ENCODE measurements at regions of chr12 and their contacts with region 1.

Region 1: GRCh38 chr12:16939871-16940306 is 333.9 kb upstream of the LMO3 start:
- DNase-seq: peak; percentile 82 to 86
- H3K4me3 ChIP-seq: no peak overlapping the region
- H3K4me3 Mint-ChIP-seq: no peak overlapping the region
- H3K27ac Mint-ChIP-seq: no peak overlapping the region
- H3K4me1 ChIP-seq: no peaks in the 10 kb centered on the region
- H3K4me1 Mint-ChIP-seq: no peaks in the 10 kb centered on the region
- H3K27me3 ChIP-seq: no peaks in the 10 kb centered on the region
- H3K27me3 Mint-ChIP-seq: peaks cover 2% of the 10 kb centered on the region
- CTCF ChIP-seq: peak; percentile 85 to 99

Region 2: GRCh38 chr12:17159506-17160300 is 219.8 kb after region 1 on chr12:
- CTCF ChIA-PET with region 1: no interaction called
- POLR2A ChIA-PET with region 1: no interaction called
- intact Hi-C with region 1: loop called (anchors 10 kb)
- DNase-seq: no peak
- H3K4me3 ChIP-seq: no peak overlapping the region
- H3K4me3 Mint-ChIP-seq: no peak overlapping the region
- H3K27ac Mint-ChIP-seq: no peak overlapping the region
- H3K4me1 ChIP-seq: no peaks in the 10 kb centered on the region
- H3K4me1 Mint-ChIP-seq: no peaks in the 10 kb centered on the region
- H3K27me3 ChIP-seq: no peaks in the 10 kb centered on the region
- H3K27me3 Mint-ChIP-seq: no peaks in the 10 kb centered on the region
- CTCF ChIP-seq: no peak

Region 3: GRCh38 chr12:17511369-17511768 is 571.5 kb after region 1 on chr12:
- CTCF ChIA-PET with region 1: no interaction called
- POLR2A ChIA-PET with region 1: no interaction called
- intact Hi-C with region 1: loop called (anchors 5 kb)
- DNase-seq: no peak
- H3K4me3 ChIP-seq: no peak overlapping the region
- H3K4me3 Mint-ChIP-seq: no peak overlapping the region
- H3K27ac Mint-ChIP-seq: no peak overlapping the region
- H3K4me1 ChIP-seq: no peaks in the 10 kb centered on the region
- H3K4me1 Mint-ChIP-seq: no peaks in the 10 kb centered on the region
- H3K27me3 ChIP-seq: no peaks in the 10 kb centered on the region
- H3K27me3 Mint-ChIP-seq: peaks cover 13% of the 10 kb centered on the region
- CTCF ChIP-seq: peak; percentile 30 to 41

Region 4: DNA sequence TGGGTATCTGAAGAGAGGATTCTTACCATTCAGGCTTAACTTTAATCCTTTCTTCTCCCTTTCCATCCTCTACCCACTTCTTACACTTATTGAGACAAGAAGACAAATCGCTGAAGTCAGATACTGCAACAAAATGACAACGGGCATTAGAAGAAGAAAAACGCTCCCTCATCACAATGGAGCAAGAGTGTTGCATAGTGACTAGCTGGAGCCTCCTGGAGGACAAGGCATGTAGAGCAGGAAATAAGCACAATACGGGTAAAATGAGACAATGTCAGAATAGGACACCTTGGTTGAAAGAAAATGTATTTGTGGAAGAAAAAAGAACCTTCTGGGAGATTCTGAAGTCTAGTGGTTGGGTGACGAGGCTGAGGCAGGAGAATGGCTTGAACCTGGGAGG is 649.1 kb after region 1 on chr12:
- CTCF ChIA-PET with region 1: no interaction called
- POLR2A ChIA-PET with region 1: no interaction called
- intact Hi-C with region 1: loop called (anchors 1 kb)
- DNase-seq: peak; percentile 52 to 56
- H3K4me3 ChIP-seq: no peak overlapping the region
- H3K4me3 Mint-ChIP-seq: no peak overlapping the region
- H3K27ac Mint-ChIP-seq: no peak overlapping the region
- H3K4me1 ChIP-seq: no peaks in the 10 kb centered on the region
- H3K4me1 Mint-ChIP-seq: no peaks in the 10 kb centered on the region
- H3K27me3 ChIP-seq: no peaks in the 10 kb centered on the region
- H3K27me3 Mint-ChIP-seq: peaks cover 5% of the 10 kb centered on the region
- CTCF ChIP-seq: peak; percentile 77 to 81

Region 5: DNA sequence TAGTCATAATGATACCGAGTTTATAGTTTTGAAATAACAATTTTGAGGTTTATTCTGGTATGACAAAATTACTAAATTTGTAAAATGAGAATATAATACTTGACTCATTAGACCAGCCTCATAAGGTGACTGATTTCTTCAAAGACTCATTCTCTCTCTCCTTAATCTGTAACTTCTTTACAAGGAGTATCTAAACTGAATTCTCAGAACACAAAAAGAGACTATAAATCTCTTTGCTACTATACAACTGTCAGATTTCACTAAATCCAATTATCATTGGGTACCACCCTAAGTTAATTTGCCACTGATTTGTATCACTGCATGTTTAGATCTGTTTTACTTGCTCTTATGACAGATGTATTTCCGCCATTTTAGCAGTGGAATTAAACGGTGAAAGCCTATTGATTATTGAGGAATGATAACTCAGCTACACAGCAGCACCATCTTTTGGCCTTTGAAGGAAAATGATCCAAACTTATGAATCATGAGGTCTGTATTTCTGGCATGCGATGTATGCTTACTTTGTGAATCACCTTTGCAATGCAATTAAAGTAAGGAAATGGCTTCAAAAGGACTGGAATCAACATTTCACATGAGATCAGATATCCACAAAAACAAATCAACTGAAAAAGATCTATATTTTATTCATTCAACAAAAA is 988.9 kb after region 1 on chr12:
- CTCF ChIA-PET with region 1: no interaction called
- POLR2A ChIA-PET with region 1: no interaction called
- intact Hi-C with region 1: loop called (anchors 1 kb)
- DNase-seq: peak; percentile 33 to 61
- H3K4me3 ChIP-seq: no peak overlapping the region
- H3K4me3 Mint-ChIP-seq: peak overlapping the region; percentile 40
- H3K27ac Mint-ChIP-seq: peak overlapping the region; percentile 41
- H3K4me1 ChIP-seq: peaks cover 18% of the 10 kb centered on the region
- H3K4me1 Mint-ChIP-seq: peaks cover 7% of the 10 kb centered on the region
- H3K27me3 ChIP-seq: no peaks in the 10 kb centered on the region
- H3K27me3 Mint-ChIP-seq: no peaks in the 10 kb centered on the region
- CTCF ChIP-seq: peak; percentile 41 to 47

Measured in Caco-2 (cell line).